ENCODE measurements at regions of chr5 and their contacts with region 1.

Region 1: GRCh38 chr5:179763215-179763945 is 30.4 kb upstream of the LTC4S start:
- DNase-seq: peak; percentile 54
- H3K4me3 Mint-ChIP-seq: no peak overlapping the region
- H3K27ac Mint-ChIP-seq: no peak overlapping the region
- H3K4me1 Mint-ChIP-seq: peaks cover 55% of the 10 kb centered on the region
- H3K27me3 Mint-ChIP-seq: no peaks in the 10 kb centered on the region

Region 2: DNA sequence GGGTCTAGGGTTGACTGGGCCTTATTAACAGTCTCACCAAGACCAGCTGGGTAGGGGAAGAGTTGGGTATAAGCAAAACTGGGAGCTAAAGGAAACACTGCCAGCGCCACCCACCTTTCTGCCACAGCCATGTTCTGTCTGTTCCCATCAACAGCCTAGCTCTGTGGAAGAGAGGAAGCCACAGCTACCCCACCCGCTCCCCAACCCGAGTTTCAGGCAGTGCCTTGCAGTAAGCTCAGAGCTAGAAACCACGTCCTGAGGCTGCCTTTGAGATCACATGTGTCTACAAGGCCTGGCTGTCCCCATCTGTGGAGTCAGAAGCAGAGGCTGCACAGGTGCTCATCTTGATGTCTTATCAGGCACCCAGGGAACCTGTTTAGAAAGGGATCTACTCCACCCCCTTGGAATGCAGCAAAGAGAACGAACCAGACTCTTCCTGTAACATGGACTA is 155.2 kb before region 1 on chr5:
- CTCF ChIA-PET with region 1: no interaction called
- POLR2A ChIA-PET with region 1: no interaction called
- DNase-seq: peak; percentile 80
- H3K4me3 Mint-ChIP-seq: no peak overlapping the region
- H3K27ac Mint-ChIP-seq: peak overlapping the region; percentile 88
- H3K4me1 Mint-ChIP-seq: peaks cover 53% of the 10 kb centered on the region
- H3K27me3 Mint-ChIP-seq: no peaks in the 10 kb centered on the region

Region 3: GRCh38 chr5:179732417-179732917 is 30.9 kb before region 1 on chr5 and contains the start of gene MAML1:
- CTCF ChIA-PET with region 1: interaction called, 11 read pairs
- POLR2A ChIA-PET with region 1: interaction called, 5 read pairs
- DNase-seq: peak; percentile 100
- H3K4me3 Mint-ChIP-seq: peak within 1 kb of the TSS; percentile 96
- H3K27ac Mint-ChIP-seq: peak within 1 kb of the TSS; percentile 87
- H3K4me1 Mint-ChIP-seq: peaks cover 37% of the 10 kb centered on the region
- H3K27me3 Mint-ChIP-seq: no peaks in the 10 kb centered on the region
- total RNA-seq, gene MAML1: 33.3 to 35.2 TPM

Region 4: DNA sequence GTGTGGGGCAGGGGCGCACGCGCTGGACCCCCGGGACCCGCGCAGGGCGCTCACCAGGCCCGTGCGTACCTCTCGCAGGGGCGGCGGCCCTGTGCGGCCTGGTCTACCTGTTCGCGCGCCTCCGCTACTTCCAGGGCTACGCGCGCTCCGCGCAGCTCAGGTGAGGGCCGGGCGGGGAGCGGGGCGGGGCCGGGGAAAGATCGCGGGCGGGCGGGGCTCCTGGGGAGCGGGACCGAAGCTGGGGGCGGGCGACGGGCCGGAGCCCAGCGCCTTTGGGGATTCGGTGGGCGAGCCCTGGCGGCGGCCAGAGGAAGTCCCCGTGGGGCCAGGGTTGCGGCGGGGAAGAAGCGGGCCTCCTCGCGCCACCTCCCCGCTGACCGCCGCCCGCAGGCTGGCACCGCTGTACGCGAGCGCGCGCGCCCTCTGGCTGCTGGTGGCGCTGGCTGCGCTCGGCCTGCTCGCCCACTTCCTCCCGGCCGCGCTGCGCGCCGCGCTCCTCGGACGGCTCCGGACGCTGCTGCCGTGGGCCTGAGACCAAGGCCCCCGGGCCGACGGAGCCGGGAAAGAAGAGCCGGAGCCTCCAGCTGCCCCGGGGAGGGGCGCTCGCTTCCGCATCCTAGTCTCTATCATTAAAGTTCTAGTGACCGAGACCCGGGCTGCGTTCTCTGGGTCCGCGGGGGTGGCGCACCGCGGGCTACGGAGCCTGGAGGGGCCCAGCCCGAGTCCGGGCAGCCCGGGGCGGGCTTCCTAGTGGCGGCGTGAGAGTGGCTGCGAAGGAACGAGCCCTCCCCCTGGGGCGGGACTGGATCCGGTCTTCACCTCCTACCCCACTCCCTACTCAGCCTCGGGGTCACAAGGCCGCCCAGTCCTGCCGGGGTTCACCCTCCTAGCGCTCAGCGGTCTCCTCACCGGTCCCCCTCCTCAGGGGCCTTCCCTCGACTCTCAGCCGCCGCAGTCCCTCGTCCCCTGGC is 32.8 kb after region 1 on chr5:
- CTCF ChIA-PET with region 1: interaction called, 14 read pairs
- POLR2A ChIA-PET with region 1: interaction called, 10 read pairs
- DNase-seq: peak; percentile 76
- H3K4me3 Mint-ChIP-seq: peak overlapping the region; percentile 59
- H3K27ac Mint-ChIP-seq: peak overlapping the region; percentile 30
- H3K4me1 Mint-ChIP-seq: peaks cover 26% of the 10 kb centered on the region
- H3K27me3 Mint-ChIP-seq: no peaks in the 10 kb centered on the region

Region 5: DNA sequence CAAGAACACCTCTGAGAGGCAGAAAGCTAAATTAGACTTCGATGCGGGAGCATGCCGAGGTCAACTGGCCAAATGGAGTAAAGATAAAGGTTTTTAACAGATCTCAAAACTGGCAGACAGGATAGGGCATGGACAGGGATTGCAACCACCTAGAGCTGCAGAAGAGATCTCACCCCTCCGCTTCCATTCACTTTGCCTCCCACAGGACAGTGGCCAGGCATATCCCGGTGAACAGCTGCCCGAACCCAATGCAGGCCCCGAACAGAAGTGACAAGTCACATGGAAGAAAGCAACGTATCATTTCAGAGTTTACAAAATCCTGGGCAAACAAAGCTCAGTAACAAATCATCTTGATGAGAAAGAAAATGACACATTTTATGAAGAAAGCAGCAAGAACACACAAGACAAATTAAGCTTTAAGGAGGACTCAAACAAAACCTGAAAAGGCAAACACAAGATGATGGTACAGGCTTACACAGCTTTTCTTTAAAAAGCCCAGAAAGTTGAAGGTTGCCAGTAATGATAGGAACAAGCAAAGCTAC is 289.8 kb after region 1 on chr5:
- CTCF ChIA-PET with region 1: no interaction called
- POLR2A ChIA-PET with region 1: no interaction called
- DNase-seq: no peak
- H3K4me3 Mint-ChIP-seq: no peak overlapping the region
- H3K27ac Mint-ChIP-seq: no peak overlapping the region
- H3K4me1 Mint-ChIP-seq: no peaks in the 10 kb centered on the region
- H3K27me3 Mint-ChIP-seq: no peaks in the 10 kb centered on the region

Measured in activated CD4-positive, alpha-beta memory T cell treated with anti-CD3 and anti-CD28 coated beads, Interleukin-2, amount 10 ng/mL, durations not matched to agents 7 days and 5 days (primary cell).